Activated CD4-positive, alpha-beta memory T cell treated with anti-CD3 and anti-CD28 coated beads, Interleukin-2, amount 10 ng/mL, durations not matched to agents 7 days and 5 days (primary cell): ENCODE measurements at regions of chr7 and their contacts with region 1.

Region 1: GRCh38 chr7:44581879-44582603 is at the start of gene TMED4:
- DNase-seq: peak; percentile 100
- H3K4me3 Mint-ChIP-seq: peak within 1 kb of the TSS; percentile 92
- H3K27ac Mint-ChIP-seq: peak within 1 kb of the TSS; percentile 85
- H3K4me1 Mint-ChIP-seq: peaks cover 42% of the 10 kb centered on the region
- H3K27me3 Mint-ChIP-seq: no peaks in the 10 kb centered on the region
- total RNA-seq, gene TMED4: 76.0 to 81.8 TPM

Region 2: GRCh38 chr7:44565097-44565794 is 16.8 kb before region 1 on chr7:
- CTCF ChIA-PET with region 1: interaction called, 16 read pairs
- POLR2A ChIA-PET with region 1: interaction called, 47 read pairs
- DNase-seq: peak; percentile 73
- H3K4me3 Mint-ChIP-seq: no peak overlapping the region
- H3K27ac Mint-ChIP-seq: no peak overlapping the region
- H3K4me1 Mint-ChIP-seq: peaks cover 2% of the 10 kb centered on the region
- H3K27me3 Mint-ChIP-seq: no peaks in the 10 kb centered on the region

Region 3: DNA sequence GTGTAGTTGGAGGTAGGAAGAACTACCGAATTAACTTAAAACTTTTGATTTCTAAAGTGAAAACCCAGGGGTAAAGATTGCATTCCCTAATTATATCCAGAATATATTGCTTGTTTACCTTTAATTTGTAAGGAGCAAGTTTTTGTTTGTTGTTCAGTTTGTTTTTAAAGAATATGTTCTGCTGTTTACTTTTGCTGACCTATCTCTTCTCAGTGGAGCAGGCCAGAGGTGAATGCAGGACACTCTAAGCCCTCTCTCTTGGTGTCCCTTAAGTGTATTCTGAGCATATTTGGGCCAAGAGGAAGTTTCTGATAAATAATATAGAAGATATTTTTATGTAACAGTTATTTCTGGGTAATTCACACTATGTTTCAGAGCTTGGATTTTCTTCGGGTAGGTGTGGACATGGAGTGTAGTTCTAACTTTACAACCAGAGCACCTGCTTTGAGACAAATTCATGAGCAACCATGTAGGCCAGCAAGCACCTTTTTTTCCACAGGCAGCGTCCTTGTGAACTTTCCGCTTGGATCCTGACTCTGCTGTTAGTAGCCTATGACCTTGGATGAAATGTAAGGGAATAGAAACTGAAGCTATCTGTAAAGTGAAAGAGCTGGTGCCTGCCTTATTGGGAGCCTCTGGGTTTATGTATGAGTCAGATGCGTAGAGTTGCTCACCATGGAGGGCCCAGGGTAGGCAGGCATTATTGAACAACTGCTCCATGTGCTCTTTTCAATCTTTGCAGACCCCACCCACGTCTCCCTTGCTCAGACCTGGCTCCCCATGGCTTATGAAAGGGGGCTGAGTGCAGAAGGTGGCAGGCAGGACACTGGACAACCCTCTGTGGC is 40.5 kb after region 1 on chr7:
- CTCF ChIA-PET with region 1: no interaction called
- POLR2A ChIA-PET with region 1: interaction called, 14 read pairs
- DNase-seq: peak; percentile 64
- H3K4me3 Mint-ChIP-seq: peak overlapping the region; percentile 54
- H3K27ac Mint-ChIP-seq: peak overlapping the region; percentile 91
- H3K4me1 Mint-ChIP-seq: peaks cover 93% of the 10 kb centered on the region
- H3K27me3 Mint-ChIP-seq: no peaks in the 10 kb centered on the region

Region 4: GRCh38 chr7:44633254-44634186 is 51.5 kb after region 1 on chr7:
- CTCF ChIA-PET with region 1: interaction called, 9 read pairs
- POLR2A ChIA-PET with region 1: interaction called, 96 read pairs
- DNase-seq: peak; percentile 67
- H3K4me3 Mint-ChIP-seq: no peak overlapping the region
- H3K27ac Mint-ChIP-seq: peak overlapping the region; percentile 100
- H3K4me1 Mint-ChIP-seq: peaks cover 99% of the 10 kb centered on the region
- H3K27me3 Mint-ChIP-seq: no peaks in the 10 kb centered on the region

Region 5: GRCh38 chr7:44748045-44748947 is 166.3 kb after region 1 on chr7 and contains the start of gene ZMIZ2:
- CTCF ChIA-PET with region 1: no interaction called
- POLR2A ChIA-PET with region 1: interaction called, 11 read pairs
- DNase-seq: peak; percentile 92
- H3K4me3 Mint-ChIP-seq: peak within 1 kb of the TSS; percentile 84
- H3K27ac Mint-ChIP-seq: peak within 1 kb of the TSS; percentile 66
- H3K4me1 Mint-ChIP-seq: peaks cover 43% of the 10 kb centered on the region
- H3K27me3 Mint-ChIP-seq: no peaks in the 10 kb centered on the region
- total RNA-seq, gene ZMIZ2: 85.2 to 91.4 TPM

Region 6: GRCh38 chr7:44797329-44798251 is 215.5 kb after region 1 on chr7:
- CTCF ChIA-PET with region 1: interaction called, 10 read pairs
- POLR2A ChIA-PET with region 1: interaction called, 39 read pairs
- DNase-seq: peak; percentile 89
- H3K4me3 Mint-ChIP-seq: peak overlapping the region; percentile 81
- H3K27ac Mint-ChIP-seq: peak overlapping the region; percentile 93
- H3K4me1 Mint-ChIP-seq: peaks cover 44% of the 10 kb centered on the region
- H3K27me3 Mint-ChIP-seq: no peaks in the 10 kb centered on the region